Ascending aorta (tissue), 2 donors: ENCODE measurements at regions of chr6 and their contacts with region 1.

Region 1: DNA sequence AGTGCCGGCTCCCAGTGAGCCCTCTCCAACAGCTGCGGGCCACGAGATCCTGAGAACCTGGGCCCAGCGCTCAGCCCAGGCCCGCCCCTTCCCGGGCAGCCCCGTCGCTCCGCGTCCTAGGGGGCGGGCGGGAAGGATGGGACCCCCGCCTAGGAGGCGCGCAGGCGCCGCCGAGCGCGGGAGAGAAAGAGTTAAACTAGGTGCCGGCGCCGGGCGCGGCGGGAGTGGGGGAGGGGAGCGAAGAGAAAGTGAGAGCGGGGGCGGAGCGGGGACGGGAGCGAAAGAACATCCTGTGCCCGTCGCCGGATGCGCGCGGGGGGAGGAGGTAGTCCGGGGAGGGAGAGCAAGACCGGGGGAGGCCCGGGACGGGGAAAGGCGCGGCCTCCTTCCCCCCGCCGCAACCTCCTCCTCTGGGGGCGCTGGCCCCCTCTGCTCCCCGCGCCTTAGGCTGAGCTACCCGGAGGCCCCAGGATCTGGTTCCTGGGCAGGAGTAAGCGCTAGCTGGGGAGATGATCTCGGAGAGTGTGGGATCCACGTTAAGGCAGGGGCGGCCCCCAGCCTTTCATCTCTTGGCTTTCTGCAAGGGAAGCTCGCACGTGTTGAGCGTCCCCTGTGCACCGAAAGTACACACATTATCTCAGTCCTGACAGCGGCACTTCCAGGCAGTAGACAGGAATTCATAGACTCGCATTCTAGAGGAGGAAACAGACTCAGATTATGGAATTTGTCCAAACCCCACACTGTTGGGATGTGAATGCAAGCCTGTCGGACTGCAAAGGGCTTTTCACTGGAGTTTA is 4.9 kb upstream of the ARMC12 start:
- DNase-seq: peak; percentile 86 to 98
- H3K4me3 ChIP-seq: peak overlapping the region; percentile 59 to 84
- H3K27ac ChIP-seq: peak overlapping the region; percentile 100
- H3K4me1 ChIP-seq: peaks cover 47 to 67% of the 10 kb centered on the region in 2 donors
- H3K27me3 ChIP-seq: no peaks in the 10 kb centered on the region
- CTCF ChIP-seq: no peak

Region 2: DNA sequence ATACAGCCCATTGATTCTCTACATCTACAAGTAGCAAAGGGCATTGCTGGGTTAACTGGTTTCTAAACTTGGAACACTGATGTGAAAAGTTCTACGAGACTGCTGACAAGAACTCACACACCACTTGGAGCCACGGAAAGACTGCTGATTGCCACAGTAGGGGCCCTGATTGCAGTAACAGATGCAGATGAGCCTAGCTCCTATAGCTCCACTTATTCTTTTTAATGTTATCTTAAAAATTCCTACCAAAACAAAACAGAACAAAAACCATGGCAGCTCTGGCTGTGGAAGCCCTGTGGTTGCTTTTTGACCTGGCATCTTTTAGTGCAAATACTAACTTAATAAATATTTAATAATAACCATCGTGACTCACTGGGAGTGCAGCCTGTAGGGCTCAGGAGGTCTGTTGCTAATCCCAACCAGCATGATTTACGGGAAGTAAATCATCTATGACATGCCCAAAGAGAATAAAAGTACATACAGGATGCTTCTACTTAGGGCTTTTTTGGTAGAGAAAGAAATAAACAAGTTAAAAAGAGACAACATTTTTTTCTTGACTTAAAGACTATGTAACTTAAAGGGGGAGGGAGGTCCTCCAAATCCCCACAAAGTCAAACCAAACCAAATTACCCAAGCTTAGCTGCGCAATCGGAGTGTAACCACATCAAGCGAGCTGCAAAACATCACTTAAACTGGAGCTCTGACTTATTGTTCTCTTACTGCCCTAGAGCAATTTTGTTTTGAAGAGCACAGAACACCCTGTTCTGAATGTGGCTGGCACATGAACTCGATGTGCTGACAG is 130.4 kb before region 1 on chr6:
- intact Hi-C with region 1: loop called (anchors 1 kb)
- DNase-seq: peak; percentile 45 to 88
- H3K4me3 ChIP-seq: peak overlapping the region; percentile 41 to 51
- H3K27ac ChIP-seq: peak overlapping the region; percentile 95 to 97
- H3K4me1 ChIP-seq: peaks cover 24 to 78% of the 10 kb centered on the region in 2 donors
- H3K27me3 ChIP-seq: no peaks in the 10 kb centered on the region
- CTCF ChIP-seq: no peak

Region 3: DNA sequence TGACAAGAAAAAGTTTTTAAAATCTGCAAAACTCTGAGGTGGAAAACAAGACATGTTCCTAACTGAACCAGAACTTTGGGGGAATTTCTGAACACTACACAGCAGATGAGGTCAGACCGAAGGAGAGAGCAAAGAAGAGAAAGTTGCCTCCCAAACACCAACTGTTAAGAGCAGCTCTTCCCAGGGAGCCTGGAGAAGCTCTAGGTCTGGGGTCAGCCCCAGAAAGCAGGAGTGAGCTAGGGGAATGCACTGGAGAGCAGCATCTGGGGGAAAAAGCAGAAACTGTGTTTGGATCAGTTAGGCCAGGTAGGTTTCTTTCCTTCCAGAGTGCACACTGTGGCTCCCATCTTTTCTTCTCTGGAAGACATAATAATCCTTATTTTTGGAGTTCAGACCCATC is 84.5 kb before region 1 on chr6:
- intact Hi-C with region 1: loop called (anchors 5 kb)
- DNase-seq: no peak
- H3K4me3 ChIP-seq: no peak overlapping the region
- H3K27ac ChIP-seq: no peak overlapping the region
- H3K4me1 ChIP-seq: peaks cover 0 to 2% of the 10 kb centered on the region in 2 donors
- H3K27me3 ChIP-seq: no peaks in the 10 kb centered on the region
- CTCF ChIP-seq: no peak